Mammary epithelial cell (primary cell): ENCODE measurements at regions of chr12 and their contacts with region 1.

Region 1: DNA sequence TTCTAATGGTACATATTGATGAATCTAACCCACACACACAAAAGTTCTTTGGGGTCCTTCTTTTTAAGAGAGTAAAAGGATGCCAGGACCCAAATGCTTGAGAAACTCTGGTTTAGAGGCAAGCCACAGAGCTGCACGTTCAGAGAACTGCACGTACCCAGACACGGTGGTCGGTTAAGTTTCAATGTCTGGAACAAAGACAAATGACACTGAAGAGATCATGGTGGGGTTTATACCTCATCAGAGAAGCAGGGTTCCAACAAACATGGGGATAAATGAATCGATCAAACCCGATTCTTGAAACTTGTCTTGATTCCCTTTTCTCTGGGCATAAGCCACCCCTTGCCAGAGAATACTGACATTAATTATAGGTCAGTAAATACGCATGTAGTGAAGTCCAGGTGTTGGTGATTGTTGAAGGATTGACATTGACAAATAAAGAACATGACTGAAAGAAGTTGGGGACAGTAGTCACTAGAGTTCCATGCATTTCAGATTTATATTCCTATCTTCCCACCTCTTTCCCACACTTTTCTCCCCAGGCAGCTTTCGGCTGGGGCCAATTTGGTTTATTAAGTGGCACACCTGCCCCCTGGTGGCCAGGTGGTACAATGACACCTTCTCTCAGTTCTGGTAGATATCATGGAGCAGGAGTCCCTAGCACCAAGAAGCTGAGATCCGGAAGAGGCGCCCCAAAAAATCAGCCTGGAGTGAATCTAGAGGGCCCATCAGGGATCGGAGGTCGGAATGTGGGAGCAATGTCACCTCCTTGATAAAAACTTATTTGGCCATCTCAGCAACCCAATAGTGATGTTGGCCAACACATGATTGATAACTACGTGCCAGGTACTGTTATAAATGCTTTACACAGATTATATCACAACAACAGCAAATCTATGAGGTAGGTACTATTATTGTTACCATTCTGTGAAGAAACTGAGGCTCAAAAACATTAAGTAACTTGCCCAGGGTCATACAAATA is 17.8 kb upstream of the HDAC7 start:
- DNase-seq: peak; percentile 62
- H3K4me3 ChIP-seq: no peak overlapping the region
- H3K27ac ChIP-seq: no peak overlapping the region
- H3K4me1 ChIP-seq: peaks cover 17% of the 10 kb centered on the region
- H3K27me3 ChIP-seq: no peaks in the 10 kb centered on the region
- CTCF ChIP-seq: peak; percentile 85 to 88

Region 2: DNA sequence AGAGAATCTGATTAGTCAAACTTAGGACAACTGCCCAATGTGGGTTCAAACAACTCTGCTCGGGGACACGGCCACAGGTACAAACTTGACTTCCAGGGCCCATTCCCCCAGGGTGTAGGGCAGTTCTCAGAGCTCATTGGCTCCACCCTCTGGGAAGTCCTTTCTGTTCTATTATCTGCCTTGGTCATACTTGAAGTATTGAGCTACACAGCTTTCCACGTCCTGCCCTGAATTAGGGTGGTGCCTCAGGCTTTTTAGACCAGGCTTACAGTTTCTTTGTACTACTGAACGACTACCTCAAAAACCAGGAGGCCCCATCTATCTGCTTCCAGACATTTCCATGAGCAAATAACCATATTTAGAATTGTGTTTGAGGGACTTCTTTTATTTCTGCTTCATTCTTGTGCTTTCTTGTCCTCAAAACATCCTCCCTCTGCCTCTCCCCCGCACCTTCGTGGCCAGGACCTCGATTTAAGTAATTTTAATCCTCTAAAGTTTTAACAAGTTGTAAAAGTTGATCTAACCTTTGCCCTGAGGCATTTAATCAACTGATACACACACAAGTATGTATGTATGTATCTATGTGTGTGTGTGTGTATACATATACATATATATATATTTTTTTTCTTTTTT is 476.0 kb before region 1 on chr12:
- CTCF ChIA-PET with region 1: no interaction called
- dilution Hi-C with region 1: no loop called
- in situ Hi-C with region 1: no loop called
- intact Hi-C with region 1: no loop called
- DNase-seq: peak; percentile 84
- H3K4me3 ChIP-seq: no peak overlapping the region
- H3K27ac ChIP-seq: no peak overlapping the region
- H3K4me1 ChIP-seq: peaks cover 14% of the 10 kb centered on the region
- H3K27me3 ChIP-seq: no peaks in the 10 kb centered on the region
- CTCF ChIP-seq: peak in 1 of 2 donors; percentile 16

Region 3: DNA sequence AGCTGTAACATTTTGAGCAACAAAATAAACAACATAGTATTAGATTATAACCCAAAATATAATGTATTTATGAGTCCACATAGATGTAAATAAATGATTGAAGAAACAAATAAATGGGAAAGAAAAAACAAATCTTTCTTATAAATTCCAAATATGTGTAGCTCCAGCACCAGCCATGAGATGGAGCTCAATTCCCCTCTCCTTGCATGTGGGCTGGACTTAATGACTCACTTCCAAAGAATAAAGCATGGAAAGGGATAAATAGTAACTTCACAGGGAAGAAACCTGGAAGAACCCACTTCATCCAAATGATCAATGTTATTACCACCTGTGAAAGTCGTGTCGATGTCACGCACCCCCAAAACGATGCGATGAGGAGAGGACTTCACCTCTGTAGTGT is 290.4 kb before region 1 on chr12:
- CTCF ChIA-PET with region 1: no interaction called
- dilution Hi-C with region 1: no loop called
- in situ Hi-C with region 1: no loop called
- intact Hi-C with region 1: loop called (anchors 2 kb)
- DNase-seq: peak; percentile 24
- H3K4me3 ChIP-seq: no peak overlapping the region
- H3K27ac ChIP-seq: no peak overlapping the region
- H3K4me1 ChIP-seq: peaks cover 8% of the 10 kb centered on the region
- H3K27me3 ChIP-seq: no peaks in the 10 kb centered on the region
- CTCF ChIP-seq: peak; percentile 68 to 71

Region 4: DNA sequence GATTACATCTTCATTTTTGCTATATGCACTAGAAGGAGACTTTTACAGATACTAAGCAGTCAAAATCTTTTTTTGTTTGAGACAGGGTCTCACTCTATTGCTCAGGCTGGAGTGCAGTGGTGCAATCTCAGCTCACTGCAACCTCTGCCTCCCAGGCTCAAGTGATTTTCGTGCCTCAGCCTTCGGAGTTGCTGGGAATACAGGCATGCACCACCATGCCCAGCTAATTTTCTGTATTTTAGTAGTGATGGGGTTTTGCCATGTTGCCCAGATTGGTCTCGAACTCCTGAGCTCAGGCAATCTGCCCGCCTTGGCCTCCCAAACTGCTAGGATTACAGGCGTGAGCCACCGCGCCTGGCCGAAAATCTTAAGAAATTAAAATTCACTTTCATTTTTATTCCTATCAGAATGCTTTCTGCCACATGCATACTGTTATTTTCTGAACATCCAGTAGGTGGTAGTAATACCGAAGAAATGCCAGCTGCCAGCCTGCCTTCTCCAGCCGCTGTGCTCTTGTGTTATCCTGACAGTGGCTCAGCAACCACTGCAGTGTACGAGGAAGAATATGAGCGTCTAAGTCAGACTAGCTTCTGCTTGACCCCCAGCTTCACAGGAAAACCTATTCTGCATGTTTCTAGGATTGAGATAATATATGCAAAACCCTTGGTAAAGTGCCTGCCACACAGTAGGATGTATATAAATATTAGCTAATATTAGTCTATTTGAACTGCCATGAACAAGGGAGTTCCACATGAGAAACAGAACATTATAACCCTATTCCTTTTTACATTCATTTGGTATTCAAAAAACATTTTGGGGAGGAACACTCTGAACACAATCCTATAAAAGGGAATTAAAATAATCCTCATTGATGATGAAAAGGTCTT is 185.9 kb before region 1 on chr12:
- CTCF ChIA-PET with region 1: no interaction called
- dilution Hi-C with region 1: no loop called
- in situ Hi-C with region 1: no loop called
- intact Hi-C with region 1: loop called (anchors 1 kb)
- DNase-seq: peak; percentile 55
- H3K4me3 ChIP-seq: no peak overlapping the region
- H3K27ac ChIP-seq: no peak overlapping the region
- H3K4me1 ChIP-seq: no peaks in the 10 kb centered on the region
- H3K27me3 ChIP-seq: no peaks in the 10 kb centered on the region
- CTCF ChIP-seq: peak; percentile 63 to 66

Region 5: GRCh38 chr12:47715393-47715876 is 122.0 kb before region 1 on chr12:
- CTCF ChIA-PET with region 1: interaction called, 13 read pairs
- dilution Hi-C with region 1: no loop called
- in situ Hi-C with region 1: loop called (anchors 10 kb)
- intact Hi-C with region 1: loop called (anchors 1 kb)
- DNase-seq: peak; percentile 77
- H3K4me3 ChIP-seq: peak overlapping the region in 1 of 3 experiments; percentile 9
- H3K27ac ChIP-seq: no peak overlapping the region
- H3K4me1 ChIP-seq: peaks cover 7% of the 10 kb centered on the region
- H3K27me3 ChIP-seq: no peaks in the 10 kb centered on the region
- CTCF ChIP-seq: peak; percentile 79 to 80

Region 6: GRCh38 chr12:47742253-47742825 is 95.1 kb before region 1 on chr12:
- CTCF ChIA-PET with region 1: interaction called, 4 read pairs
- dilution Hi-C with region 1: no loop called
- in situ Hi-C with region 1: loop called in 1 of 2 experiments (anchors 5 kb)
- intact Hi-C with region 1: loop called (anchors 1 kb)
- DNase-seq: no peak
- H3K4me3 ChIP-seq: no peak overlapping the region
- H3K27ac ChIP-seq: no peak overlapping the region
- H3K4me1 ChIP-seq: peaks cover 21% of the 10 kb centered on the region
- H3K27me3 ChIP-seq: no peaks in the 10 kb centered on the region
- CTCF ChIP-seq: peak; percentile 98 to 99

Region 7: GRCh38 chr12:47797441-47797840 is 40.0 kb before region 1 on chr12:
- CTCF ChIA-PET with region 1: interaction called, 6 read pairs
- dilution Hi-C with region 1: no loop called
- in situ Hi-C with region 1: no loop called
- intact Hi-C with region 1: loop called (anchors 1 kb)
- DNase-seq: no peak
- H3K4me3 ChIP-seq: no peak overlapping the region
- H3K27ac ChIP-seq: no peak overlapping the region
- H3K4me1 ChIP-seq: peaks cover 6% of the 10 kb centered on the region
- H3K27me3 ChIP-seq: no peaks in the 10 kb centered on the region
- CTCF ChIP-seq: peak; percentile 15 to 48

Region 8: DNA sequence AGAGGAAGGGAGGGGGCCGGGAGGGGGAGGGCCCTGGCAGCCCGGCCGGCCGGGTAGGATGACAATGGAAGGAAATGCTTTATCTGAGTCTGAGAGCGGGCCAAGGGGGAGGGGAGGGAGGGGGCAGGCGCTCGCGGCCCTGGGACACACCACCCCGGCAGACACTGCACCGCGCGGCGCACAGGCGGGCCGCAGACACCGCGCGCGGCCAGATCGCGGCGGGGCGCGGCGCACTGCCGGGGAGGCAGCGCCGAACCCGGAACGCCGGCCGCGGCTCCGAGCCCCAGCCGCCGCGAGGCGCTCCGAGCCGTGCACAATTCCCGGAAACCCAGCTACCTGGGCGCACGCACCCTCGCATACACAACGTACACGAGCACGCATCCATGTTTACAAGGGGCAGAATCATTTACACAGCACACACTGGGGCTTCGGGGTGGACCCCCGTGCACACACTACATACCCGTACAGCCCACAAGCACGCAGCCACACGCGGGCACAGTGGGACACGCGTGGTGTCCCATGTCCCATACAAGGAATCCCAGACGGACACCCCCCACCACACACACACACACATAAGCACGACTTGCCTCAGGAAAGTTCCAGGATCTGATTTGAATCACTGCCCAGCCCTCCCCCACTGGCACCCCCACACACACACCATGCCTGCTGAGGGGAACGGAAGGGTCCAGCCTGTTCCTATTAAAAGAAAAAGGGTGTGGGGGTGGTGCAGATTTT is 17.4 kb before region 1 on chr12 and contains the start of gene HDAC7:
- CTCF ChIA-PET with region 1: no interaction called
- dilution Hi-C with region 1: no loop called
- in situ Hi-C with region 1: no loop called
- intact Hi-C with region 1: loop called (anchors 1 kb)
- DNase-seq: peak; percentile 68
- H3K4me3 ChIP-seq: peak within 1 kb of the TSS; percentile 45 to 79 (median 71)
- H3K27ac ChIP-seq: peak within 1 kb of the TSS; percentile 78
- H3K4me1 ChIP-seq: peaks cover 48% of the 10 kb centered on the region
- H3K27me3 ChIP-seq: no peaks in the 10 kb centered on the region
- CTCF ChIP-seq: peak in 1 of 2 donors; percentile 14
- total RNA-seq, gene HDAC7: 17.7 to 72.1 TPM